GM12878 (cell line): ENCODE measurements at regions of chr15 and their contacts with region 1.

Region 1: DNA sequence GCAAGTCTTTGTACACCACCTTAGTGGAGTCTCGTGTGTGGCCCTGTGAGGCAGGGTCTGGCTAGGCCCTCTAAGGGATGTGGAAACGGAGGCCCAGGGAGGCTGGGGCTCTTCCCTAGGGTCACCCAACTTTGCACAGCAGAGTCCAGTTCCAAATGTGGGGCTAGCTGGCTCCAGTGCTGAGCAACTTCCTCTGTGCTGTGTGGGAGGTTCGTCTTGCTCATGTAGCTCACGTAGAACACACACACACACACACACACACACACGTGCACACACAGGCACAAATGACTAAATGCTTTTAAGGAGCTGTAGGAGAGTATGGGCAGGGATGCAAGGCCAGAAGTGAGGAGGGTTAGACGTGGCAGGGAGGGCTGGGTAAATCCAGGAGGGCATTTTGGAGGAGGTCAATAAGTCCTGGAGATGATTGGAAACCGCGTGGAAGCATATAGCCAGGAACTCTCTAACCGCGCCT is 213.8 kb downstream of the RPLP1 start:
- DNase-seq: no peak
- ATAC-seq: peak; percentile 30
- H3K4me3 ChIP-seq: peak overlapping the region; percentile 52; the same call in 1 of the 2 replicates
- H3K27ac ChIP-seq: peak overlapping the region; percentile 87
- H3K4me1 ChIP-seq: peaks cover 54% of the 10 kb centered on the region
- H3K27me3 ChIP-seq: no peaks in the 10 kb centered on the region; a peak in 2 of 4 replicates
- CTCF ChIP-seq: no peak
- EP300 ChIP-seq: no peak
- POLR2A ChIP-seq: no peak
- RAD21 ChIP-seq: no peak

Region 2: GRCh38 chr15:69628371-69629093 is 37.9 kb before region 1 on chr15:
- CTCF ChIA-PET with region 1: no interaction called
- POLR2A ChIA-PET with region 1: interaction called, 4 read pairs
- RAD21 ChIA-PET with region 1: interaction called, 11 read pairs
- SMC1A ChIA-PET with region 1: interaction called, 15 read pairs
- in situ Hi-C with region 1: no loop called
- intact Hi-C with region 1: no loop called
- DNase-seq: no peak
- ATAC-seq: no peak
- H3K4me3 ChIP-seq: no peak overlapping the region
- H3K27ac ChIP-seq: no peak overlapping the region
- H3K4me1 ChIP-seq: no peaks in the 10 kb centered on the region
- H3K27me3 ChIP-seq: peaks cover 0 to 8% of the 10 kb centered on the region in 2 experiments; a peak in 3 of 4 replicates
- CTCF ChIP-seq: no peak
- EP300 ChIP-seq: no peak
- POLR2A ChIP-seq: no peak
- RAD21 ChIP-seq: no peak

Region 3: DNA sequence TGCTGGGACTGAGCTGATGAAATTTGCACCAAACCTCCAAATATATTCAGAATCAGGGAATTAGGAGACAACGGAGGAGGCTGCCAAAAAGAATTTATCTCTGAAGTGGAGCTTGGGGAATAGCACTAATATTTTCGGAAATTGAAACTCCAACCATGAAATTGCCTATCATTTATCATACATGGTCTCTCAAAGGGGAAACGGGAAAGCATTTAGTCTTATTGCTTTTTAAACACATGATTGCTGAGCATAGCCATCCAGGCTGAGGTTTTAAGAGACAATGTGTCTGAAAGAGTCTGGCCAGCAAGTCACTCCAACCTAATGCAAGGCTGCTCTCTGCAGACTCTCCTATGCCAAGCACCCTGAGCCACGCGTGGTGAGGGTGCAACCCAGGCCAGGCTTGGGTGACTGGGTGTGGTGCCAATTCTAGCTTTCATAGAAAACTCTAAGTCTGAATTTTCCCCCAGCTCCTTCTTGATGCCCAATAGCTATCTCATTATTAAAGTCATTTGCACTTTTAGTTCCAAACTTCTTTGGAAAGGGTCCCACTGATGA is 13.6 kb before region 1 on chr15:
- CTCF ChIA-PET with region 1: no interaction called
- POLR2A ChIA-PET with region 1: interaction called, 7 read pairs
- RAD21 ChIA-PET with region 1: interaction called, 10 read pairs
- SMC1A ChIA-PET with region 1: no interaction called
- in situ Hi-C with region 1: no loop called
- intact Hi-C with region 1: no loop called
- DNase-seq: no peak
- ATAC-seq: no peak
- H3K4me3 ChIP-seq: no peak overlapping the region
- H3K27ac ChIP-seq: no peak overlapping the region
- H3K4me1 ChIP-seq: no peaks in the 10 kb centered on the region; the same call in 1 of the 2 replicates
- H3K27me3 ChIP-seq: peaks cover 0 to 9% of the 10 kb centered on the region in 2 experiments
- CTCF ChIP-seq: no peak
- EP300 ChIP-seq: no peak
- POLR2A ChIP-seq: no peak
- RAD21 ChIP-seq: no peak

Region 4: DNA sequence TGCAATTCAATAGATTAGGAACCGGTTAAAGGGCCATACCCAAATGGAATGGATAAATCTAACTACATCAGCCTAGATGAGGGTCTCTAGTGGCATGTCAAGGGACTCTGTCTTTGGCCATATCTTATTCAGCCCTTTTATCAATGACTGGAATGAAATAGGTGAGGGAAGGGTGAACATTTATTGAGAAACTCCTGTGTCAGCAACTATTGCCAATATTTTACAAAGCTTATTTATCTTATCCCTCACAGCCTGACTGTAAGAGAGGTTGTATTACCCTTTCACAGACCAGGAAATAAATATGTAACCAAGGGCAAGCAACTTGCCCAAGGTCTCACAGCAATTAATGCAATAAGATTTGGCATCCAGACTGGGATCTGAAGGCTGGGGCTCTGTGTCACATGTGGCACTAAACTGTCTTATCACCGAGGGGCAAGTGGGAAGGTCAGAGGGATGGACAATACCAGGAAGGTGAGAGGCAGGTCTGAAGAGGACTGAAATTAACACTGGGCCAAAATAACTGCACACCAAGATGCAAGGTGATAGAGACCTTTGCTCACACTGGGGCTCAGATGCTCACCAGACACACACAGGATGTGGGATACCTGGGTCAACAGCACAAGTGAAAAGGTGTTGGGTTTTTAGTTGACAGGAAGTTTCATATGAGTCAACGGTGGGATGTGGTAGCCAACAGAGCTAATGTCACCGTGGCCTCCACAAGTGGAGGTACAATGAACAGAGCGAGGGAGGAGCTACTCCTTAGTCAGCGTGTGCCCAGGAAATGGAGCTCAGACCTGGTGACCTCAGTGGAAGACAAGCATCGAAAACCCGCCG is 47.5 kb after region 1 on chr15:
- CTCF ChIA-PET with region 1: no interaction called
- POLR2A ChIA-PET with region 1: interaction called, 3 read pairs
- RAD21 ChIA-PET with region 1: interaction called, 8 read pairs
- SMC1A ChIA-PET with region 1: interaction called, 17 read pairs
- in situ Hi-C with region 1: no loop called
- intact Hi-C with region 1: loop called (anchors 2 kb)
- DNase-seq: peak; percentile 88
- ATAC-seq: peak; percentile 96
- H3K4me3 ChIP-seq: no peak overlapping the region
- H3K27ac ChIP-seq: no peak overlapping the region
- H3K4me1 ChIP-seq: peaks cover 27% of the 10 kb centered on the region
- H3K27me3 ChIP-seq: no peaks in the 10 kb centered on the region
- CTCF ChIP-seq: no peak
- EP300 ChIP-seq: peak; percentile 80 to 89; a peak in 3 of 4 replicates
- POLR2A ChIP-seq: no peak
- RAD21 ChIP-seq: no peak